ENCODE measurements at regions of chr9 and their contacts with region 1.

Region 1: GRCh38 chr9:114413861-114414301 is 26.1 kb upstream of the AKNA start:
- DNase-seq: no peak
- H3K4me3 ChIP-seq: no peak overlapping the region
- CTCF ChIP-seq: no peak

Region 2: GRCh38 chr9:114428466-114428865 is 14.6 kb after region 1 on chr9:
- CTCF ChIA-PET with region 1: interaction called, 39 read pairs
- POLR2A ChIA-PET with region 1: no interaction called
- DNase-seq: no peak
- H3K4me3 ChIP-seq: no peak overlapping the region
- CTCF ChIP-seq: no peak

Measured in AG04449 (cell line).